T-cell (primary cell): ENCODE measurements at regions of chr5 and their contacts with region 1.

Region 1: DNA sequence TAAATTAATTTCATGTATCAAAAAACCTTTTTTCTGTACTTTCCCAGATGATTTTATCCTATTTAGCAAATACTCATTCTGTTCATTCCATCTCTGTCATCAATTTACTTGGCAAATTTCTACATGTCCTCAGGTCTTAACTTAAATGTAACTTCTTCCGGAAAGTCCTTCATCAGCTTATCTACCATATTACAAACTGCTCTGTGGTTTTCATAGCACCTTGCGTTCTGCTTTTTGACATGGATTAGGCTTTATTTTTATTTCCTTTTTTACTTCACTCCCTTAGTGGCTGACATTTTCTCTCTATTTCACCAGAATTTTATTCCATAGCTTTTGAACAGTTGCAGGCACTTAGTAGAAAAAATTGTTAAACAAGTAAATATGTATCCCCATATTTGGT is 1040.8 kb downstream of the TAF11L14 start:
- DNase-seq: no peak
- ATAC-seq: no peak
- H3K4me3 ChIP-seq: no peak overlapping the region
- H3K4me3 Mint-ChIP-seq: no peak overlapping the region
- H3K27ac ChIP-seq: no peak overlapping the region
- H3K27ac Mint-ChIP-seq: no peak overlapping the region
- H3K4me1 ChIP-seq: no peaks in the 10 kb centered on the region
- H3K4me1 Mint-ChIP-seq: no peaks in the 10 kb centered on the region
- H3K27me3 ChIP-seq: no peaks in the 10 kb centered on the region
- H3K27me3 Mint-ChIP-seq: peaks cover 0 to 3% of the 10 kb centered on the region in 2 donors

Region 2: DNA sequence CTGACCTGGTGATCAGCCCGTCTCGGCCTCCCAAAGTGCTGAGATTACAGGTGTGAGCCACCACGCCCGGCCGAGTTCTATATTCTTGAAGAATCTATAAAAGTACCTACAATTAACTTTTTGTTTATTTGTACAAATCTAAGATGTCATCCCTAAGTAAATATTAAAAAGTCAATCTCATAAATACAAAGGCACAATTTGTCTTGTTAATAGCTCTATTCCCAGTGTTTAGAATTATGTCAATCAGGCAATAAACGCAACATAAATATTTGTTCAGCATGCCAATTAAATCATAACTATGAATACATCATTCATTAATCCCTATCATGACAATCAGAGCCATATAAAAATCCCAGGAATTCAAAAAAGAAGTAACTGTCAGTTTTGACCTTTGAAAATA is 1381.9 kb after region 1 on chr5:
- CTCF ChIA-PET with region 1: interaction called in 1 of 2 experiments, 13 read pairs
- POLR2A ChIA-PET with region 1: no interaction called
- DNase-seq: no peak
- ATAC-seq: no peak
- H3K4me3 ChIP-seq: no peak overlapping the region
- H3K4me3 Mint-ChIP-seq: no peak overlapping the region
- H3K27ac ChIP-seq: no peak overlapping the region
- H3K27ac Mint-ChIP-seq: no peak overlapping the region
- H3K4me1 ChIP-seq: no peaks in the 10 kb centered on the region
- H3K4me1 Mint-ChIP-seq: no peaks in the 10 kb centered on the region
- H3K27me3 ChIP-seq: no peaks in the 10 kb centered on the region
- H3K27me3 Mint-ChIP-seq: no peaks in the 10 kb centered on the region